ENCODE measurements at regions of chr10 and their contacts with region 1.

Region 1: DNA sequence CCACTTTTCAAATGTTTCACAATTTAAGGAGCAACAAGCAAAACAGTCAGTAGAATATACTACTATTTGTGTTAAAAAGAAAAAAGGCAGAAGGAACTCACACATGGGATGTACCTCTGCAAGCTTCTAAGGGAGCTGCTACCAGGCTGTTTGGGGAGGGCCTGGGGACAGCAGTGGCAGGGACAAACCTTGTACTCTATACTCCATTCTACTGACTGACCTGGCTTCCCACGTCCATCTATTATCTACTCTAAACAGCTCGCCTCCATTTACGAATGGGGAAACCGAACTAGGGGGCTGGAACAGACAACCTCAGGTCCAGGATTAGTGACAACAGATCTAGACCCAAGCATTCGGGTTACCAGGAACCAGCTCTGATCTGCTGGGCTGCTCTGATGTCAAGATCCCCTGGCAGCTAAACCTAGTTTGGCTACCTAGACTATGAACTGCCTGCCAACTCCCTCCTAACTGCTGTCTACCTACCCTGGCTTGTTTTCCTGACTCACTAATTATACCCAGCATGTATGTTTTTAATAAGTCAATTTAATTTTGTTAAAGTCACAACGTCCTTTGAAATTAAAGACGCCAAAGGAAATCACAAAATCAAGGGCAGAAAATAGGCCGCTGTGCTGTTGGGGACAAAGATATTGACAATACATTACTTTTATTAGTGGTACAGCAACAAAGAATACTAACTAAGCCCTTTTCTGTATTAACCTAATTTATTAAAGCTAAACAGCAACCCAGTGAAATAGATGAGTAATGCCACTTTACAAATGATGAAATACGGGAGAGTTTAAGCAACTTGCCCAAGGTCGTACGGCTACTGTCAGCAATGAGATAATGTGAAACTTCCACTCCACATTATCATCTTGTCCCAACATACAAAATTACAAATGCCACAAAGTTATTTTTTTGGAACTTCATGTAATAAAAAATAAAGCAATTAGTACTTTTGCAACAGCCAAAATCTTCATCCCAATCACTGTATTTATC is 5.3 kb downstream of the PSAP start:
- H3K4me3 ChIP-seq: no peak overlapping the region
- H3K27ac ChIP-seq: no peak overlapping the region
- H3K4me1 ChIP-seq: peaks cover 13% of the 10 kb centered on the region; the same call in 1 of the 2 replicates
- CTCF ChIP-seq: no peak

Region 2: GRCh38 chr10:70053841-70054288 is 1791.8 kb before region 1 on chr10:
- CTCF ChIA-PET with region 1: no interaction called
- POLR2A ChIA-PET with region 1: interaction called, 10 read pairs
- H3K4me3 ChIP-seq: peak overlapping the region; percentile 56
- H3K27ac ChIP-seq: peak overlapping the region; percentile 89; the same call in 1 of the 2 replicates
- H3K4me1 ChIP-seq: peaks cover 15% of the 10 kb centered on the region
- CTCF ChIP-seq: peak; percentile 63

Region 3: DNA sequence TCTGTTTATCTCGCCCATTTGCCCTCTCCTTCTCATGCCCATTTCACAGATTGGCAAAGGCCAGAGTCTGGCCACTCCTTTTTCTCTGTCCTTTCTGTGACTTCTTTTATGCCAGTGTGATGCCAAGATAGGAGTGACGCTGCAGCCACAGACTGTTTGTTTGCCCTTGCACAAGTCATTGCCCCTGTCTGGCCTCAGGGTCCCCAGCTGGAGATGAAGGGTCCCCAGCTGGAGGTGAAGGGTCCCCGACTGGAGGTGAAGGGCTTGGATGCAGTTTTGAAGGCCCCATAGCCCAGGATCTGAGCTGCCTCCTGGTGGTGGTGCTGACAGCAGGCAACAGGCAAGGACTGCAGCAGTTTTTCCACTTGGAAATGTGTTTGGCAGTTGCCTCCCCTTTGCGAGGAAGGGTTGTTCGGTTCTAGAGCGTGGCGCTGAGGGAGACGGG is 577.4 kb before region 1 on chr10:
- CTCF ChIA-PET with region 1: no interaction called
- POLR2A ChIA-PET with region 1: no interaction called
- H3K4me3 ChIP-seq: no peak overlapping the region
- H3K27ac ChIP-seq: no peak overlapping the region
- H3K4me1 ChIP-seq: no peaks in the 10 kb centered on the region; the same call in 1 of the 2 replicates
- CTCF ChIP-seq: peak; percentile 52

Region 4: GRCh38 chr10:71589617-71590551 is 255.8 kb before region 1 on chr10:
- CTCF ChIA-PET with region 1: no interaction called
- POLR2A ChIA-PET with region 1: no interaction called
- H3K4me3 ChIP-seq: no peak overlapping the region
- H3K27ac ChIP-seq: no peak overlapping the region
- H3K4me1 ChIP-seq: 0 out of 2 replicates have a peak, but pooled peaks cover 3% of the 10 kb centered on the region
- CTCF ChIP-seq: no peak

Region 5: GRCh38 chr10:71756311-71757191 is 89.2 kb before region 1 on chr10:
- CTCF ChIA-PET with region 1: no interaction called
- POLR2A ChIA-PET with region 1: no interaction called
- H3K4me3 ChIP-seq: no peak overlapping the region
- H3K27ac ChIP-seq: no peak overlapping the region
- H3K4me1 ChIP-seq: no peaks in the 10 kb centered on the region
- CTCF ChIP-seq: no peak